ENCODE measurements at regions of chr3 and their contacts with region 1.

Region 1: GRCh38 chr3:159763602-159764489 is 224.8 kb upstream of the IL12A start:
- DNase-seq: peak; percentile 91
- H3K4me3 ChIP-seq: peak overlapping the region; percentile 79
- H3K4me3 Mint-ChIP-seq: peak overlapping the region; percentile 87
- H3K27ac Mint-ChIP-seq: peak overlapping the region; percentile 84
- H3K4me1 ChIP-seq: peaks cover 31% of the 10 kb centered on the region
- H3K4me1 Mint-ChIP-seq: peaks cover 28% of the 10 kb centered on the region
- H3K27me3 ChIP-seq: no peaks in the 10 kb centered on the region
- H3K27me3 Mint-ChIP-seq: no peaks in the 10 kb centered on the region
- CTCF ChIP-seq: peak in 1 of 2 experiments; percentile 17

Region 2: GRCh38 chr3:159616212-159616825 is 147.5 kb before region 1 on chr3:
- CTCF ChIA-PET with region 1: no interaction called
- POLR2A ChIA-PET with region 1: no interaction called
- intact Hi-C with region 1: loop called (anchors 1 kb)
- DNase-seq: peak; percentile 72 to 73
- H3K4me3 ChIP-seq: no peak overlapping the region
- H3K4me3 Mint-ChIP-seq: no peak overlapping the region
- H3K27ac Mint-ChIP-seq: no peak overlapping the region
- H3K4me1 ChIP-seq: peaks cover 6% of the 10 kb centered on the region
- H3K4me1 Mint-ChIP-seq: no peaks in the 10 kb centered on the region
- H3K27me3 ChIP-seq: no peaks in the 10 kb centered on the region
- H3K27me3 Mint-ChIP-seq: no peaks in the 10 kb centered on the region
- CTCF ChIP-seq: peak; percentile 51 to 65

Region 3: DNA sequence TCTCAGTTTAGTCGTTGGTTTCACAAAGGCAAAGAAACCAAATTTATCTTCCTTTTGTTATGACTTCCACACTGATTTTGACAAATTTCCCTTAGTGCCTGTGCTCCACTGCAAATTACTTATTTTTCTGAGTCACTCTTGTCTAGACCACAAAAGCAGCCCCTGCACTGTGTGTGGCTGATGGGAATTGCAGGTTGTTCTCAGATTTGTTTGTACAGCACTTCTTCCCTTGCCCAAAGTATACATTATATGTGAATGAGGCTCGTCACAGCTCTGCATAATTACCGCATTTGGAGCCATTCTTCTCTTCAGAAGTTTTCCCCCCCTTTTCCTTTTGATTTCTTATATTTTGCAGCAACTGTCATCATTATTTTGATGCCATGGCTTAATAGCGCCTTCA is 129.4 kb before region 1 on chr3:
- CTCF ChIA-PET with region 1: no interaction called
- POLR2A ChIA-PET with region 1: no interaction called
- intact Hi-C with region 1: loop called (anchors 5 kb)
- DNase-seq: no peak
- H3K4me3 ChIP-seq: no peak overlapping the region
- H3K4me3 Mint-ChIP-seq: peak overlapping the region; percentile 37
- H3K27ac Mint-ChIP-seq: peak overlapping the region; percentile 65
- H3K4me1 ChIP-seq: peaks cover 54% of the 10 kb centered on the region
- H3K4me1 Mint-ChIP-seq: peaks cover 44% of the 10 kb centered on the region
- H3K27me3 ChIP-seq: no peaks in the 10 kb centered on the region
- H3K27me3 Mint-ChIP-seq: no peaks in the 10 kb centered on the region
- CTCF ChIP-seq: no peak

Region 4: GRCh38 chr3:159787191-159787590 is 23.3 kb after region 1 on chr3:
- CTCF ChIA-PET with region 1: interaction called, 5 read pairs
- POLR2A ChIA-PET with region 1: interaction called, 13 read pairs
- intact Hi-C with region 1: loop called (anchors 1 kb)
- DNase-seq: peak; percentile 67 to 78
- H3K4me3 ChIP-seq: no peak overlapping the region
- H3K4me3 Mint-ChIP-seq: peak overlapping the region; percentile 65
- H3K27ac Mint-ChIP-seq: peak overlapping the region; percentile 96
- H3K4me1 ChIP-seq: peaks cover 99% of the 10 kb centered on the region
- H3K4me1 Mint-ChIP-seq: peaks cover 65% of the 10 kb centered on the region
- H3K27me3 ChIP-seq: no peaks in the 10 kb centered on the region
- H3K27me3 Mint-ChIP-seq: no peaks in the 10 kb centered on the region
- CTCF ChIP-seq: no peak

Region 5: DNA sequence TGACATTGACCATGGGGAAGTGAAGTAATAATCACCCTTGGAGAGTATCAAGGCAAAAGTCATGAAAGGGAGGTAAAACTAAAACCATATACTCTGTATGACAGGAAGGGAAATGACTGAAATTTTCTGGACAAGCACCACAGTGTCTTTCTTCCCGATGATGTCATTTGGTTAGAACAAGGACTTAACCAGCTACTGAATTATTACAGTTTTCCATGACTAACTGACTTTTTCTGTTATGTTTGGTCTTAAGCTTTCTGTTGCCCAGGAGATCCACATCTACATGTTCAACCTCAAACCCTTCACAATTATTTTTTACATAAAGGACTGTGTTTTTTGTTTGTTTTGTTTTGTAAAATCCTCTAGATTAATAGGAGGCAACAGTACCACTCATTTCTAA is 32.9 kb after region 1 on chr3:
- CTCF ChIA-PET with region 1: no interaction called
- POLR2A ChIA-PET with region 1: no interaction called
- intact Hi-C with region 1: loop called (anchors 1 kb)
- DNase-seq: no peak
- H3K4me3 ChIP-seq: no peak overlapping the region
- H3K4me3 Mint-ChIP-seq: no peak overlapping the region
- H3K27ac Mint-ChIP-seq: no peak overlapping the region
- H3K4me1 ChIP-seq: peaks cover 61% of the 10 kb centered on the region
- H3K4me1 Mint-ChIP-seq: peaks cover 31% of the 10 kb centered on the region
- H3K27me3 ChIP-seq: no peaks in the 10 kb centered on the region
- H3K27me3 Mint-ChIP-seq: no peaks in the 10 kb centered on the region
- CTCF ChIP-seq: no peak